Gastrocnemius medialis (tissue), 4 donors: ENCODE measurements at regions of chr3 and their contacts with region 1.

Region 1: GRCh38 chr3:114056130-114057010 is at the starts of genes CCDC191 and QTRT2:
- DNase-seq: peak; percentile 99
- ATAC-seq: peak; percentile 97 to 98
- H3K4me3 ChIP-seq: peak within 1 kb of the TSS; percentile 76 to 87 (median 82)
- H3K27ac ChIP-seq: peak within 1 kb of the TSS; percentile 79 to 83 (median 82)
- H3K4me1 ChIP-seq: peaks cover 10 to 19% of the 10 kb centered on the region in 2 donors
- H3K27me3 ChIP-seq: no peaks in the 10 kb centered on the region
- CTCF ChIP-seq: no peak
- POLR2A ChIP-seq: no peak
- total RNA-seq, gene CCDC191: 0.29 to 0.82 (median 0.42) TPM
- total RNA-seq, gene QTRT2: 3.3 to 7.1 (median 6.9) TPM

Region 2: GRCh38 chr3:113019182-113020137 is 1036.9 kb before region 1 on chr3:
- in situ Hi-C with region 1: loop called in 1 of 4 experiments (anchors 25 kb)
- intact Hi-C with region 1: loop called (anchors 10 kb)
- DNase-seq: peak; percentile 82 to 87
- ATAC-seq: peak; percentile 93 to 94
- H3K4me3 ChIP-seq: peak overlapping the region; percentile 80 to 94 (median 90)
- H3K27ac ChIP-seq: peak overlapping the region; percentile 92 to 97 (median 94)
- H3K4me1 ChIP-seq: peaks cover 12 to 16% of the 10 kb centered on the region in 2 donors
- H3K27me3 ChIP-seq: no peaks in the 10 kb centered on the region
- CTCF ChIP-seq: no peak
- POLR2A ChIP-seq: peak; percentile 51 to 65

Region 3: GRCh38 chr3:113736548-113737089 is 319.8 kb before region 1 on chr3:
- in situ Hi-C with region 1: loop called in 3 of 4 experiments (anchors 10 to 25 kb)
- intact Hi-C with region 1: no loop called
- DNase-seq: no peak
- ATAC-seq: peak; percentile 51 to 53
- H3K4me3 ChIP-seq: peak overlapping the region in 1 of 4 donors; percentile 2
- H3K27ac ChIP-seq: peak overlapping the region; percentile 27 to 60 (median 50)
- H3K4me1 ChIP-seq: peaks cover 80 to 86% of the 10 kb centered on the region in 2 donors
- H3K27me3 ChIP-seq: no peaks in the 10 kb centered on the region
- CTCF ChIP-seq: peak; percentile 52 to 69 (median 66)
- POLR2A ChIP-seq: no peak

Region 4: DNA sequence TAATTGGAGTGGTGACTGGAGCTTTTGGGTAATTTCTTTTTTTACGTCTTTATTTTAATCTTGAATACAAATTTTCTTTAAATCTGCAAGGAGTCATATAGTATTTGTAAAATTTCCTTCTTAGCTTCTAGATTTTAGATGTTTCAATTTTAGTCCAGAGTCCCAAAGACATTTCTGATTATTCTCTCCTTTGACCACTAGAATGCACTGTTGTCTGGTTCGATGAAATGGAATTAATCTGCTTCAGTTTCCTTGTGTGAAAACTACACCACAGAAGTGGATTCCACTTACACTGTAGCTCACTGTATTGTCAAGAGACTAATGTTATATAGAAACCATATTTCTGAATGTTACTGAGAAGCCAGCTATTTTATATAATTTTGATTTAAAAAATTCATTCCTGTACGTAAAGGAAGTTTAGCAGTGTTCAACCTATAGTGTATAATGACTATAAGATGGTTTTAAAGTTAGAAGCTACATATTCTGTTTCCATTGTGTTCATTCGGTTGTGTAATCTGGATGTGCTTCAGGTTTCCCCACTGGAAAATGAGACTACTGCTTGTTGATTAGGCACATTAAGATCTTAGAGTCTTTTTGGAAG is 211.6 kb before region 1 on chr3:
- in situ Hi-C with region 1: loop called in 1 of 4 experiments (anchors 10 kb)
- intact Hi-C with region 1: loop called (anchors 2 kb)
- DNase-seq: no peak
- ATAC-seq: no peak
- H3K4me3 ChIP-seq: no peak overlapping the region
- H3K27ac ChIP-seq: no peak overlapping the region
- H3K4me1 ChIP-seq: no peaks in the 10 kb centered on the region
- H3K27me3 ChIP-seq: no peaks in the 10 kb centered on the region
- CTCF ChIP-seq: peak in 2 of 5 experiments; percentile 28 to 43
- POLR2A ChIP-seq: no peak

Region 5: GRCh38 chr3:114112696-114113095 is 56.3 kb after region 1 on chr3:
- in situ Hi-C with region 1: no loop called
- intact Hi-C with region 1: no loop called
- DNase-seq: no peak
- ATAC-seq: no peak
- H3K4me3 ChIP-seq: no peak overlapping the region
- H3K27ac ChIP-seq: no peak overlapping the region
- H3K4me1 ChIP-seq: no peaks in the 10 kb centered on the region
- H3K27me3 ChIP-seq: no peaks in the 10 kb centered on the region
- CTCF ChIP-seq: no peak
- POLR2A ChIP-seq: no peak

Region 6: GRCh38 chr3:114176890-114177289 is 120.5 kb after region 1 on chr3:
- in situ Hi-C with region 1: no loop called
- intact Hi-C with region 1: no loop called
- DNase-seq: no peak
- ATAC-seq: no peak
- H3K4me3 ChIP-seq: no peak overlapping the region
- H3K27ac ChIP-seq: no peak overlapping the region
- H3K4me1 ChIP-seq: no peaks in the 10 kb centered on the region
- H3K27me3 ChIP-seq: no peaks in the 10 kb centered on the region
- CTCF ChIP-seq: no peak
- POLR2A ChIP-seq: no peak